ENCODE measurements at regions of chr14 and their contacts with region 1.

Region 1: DNA sequence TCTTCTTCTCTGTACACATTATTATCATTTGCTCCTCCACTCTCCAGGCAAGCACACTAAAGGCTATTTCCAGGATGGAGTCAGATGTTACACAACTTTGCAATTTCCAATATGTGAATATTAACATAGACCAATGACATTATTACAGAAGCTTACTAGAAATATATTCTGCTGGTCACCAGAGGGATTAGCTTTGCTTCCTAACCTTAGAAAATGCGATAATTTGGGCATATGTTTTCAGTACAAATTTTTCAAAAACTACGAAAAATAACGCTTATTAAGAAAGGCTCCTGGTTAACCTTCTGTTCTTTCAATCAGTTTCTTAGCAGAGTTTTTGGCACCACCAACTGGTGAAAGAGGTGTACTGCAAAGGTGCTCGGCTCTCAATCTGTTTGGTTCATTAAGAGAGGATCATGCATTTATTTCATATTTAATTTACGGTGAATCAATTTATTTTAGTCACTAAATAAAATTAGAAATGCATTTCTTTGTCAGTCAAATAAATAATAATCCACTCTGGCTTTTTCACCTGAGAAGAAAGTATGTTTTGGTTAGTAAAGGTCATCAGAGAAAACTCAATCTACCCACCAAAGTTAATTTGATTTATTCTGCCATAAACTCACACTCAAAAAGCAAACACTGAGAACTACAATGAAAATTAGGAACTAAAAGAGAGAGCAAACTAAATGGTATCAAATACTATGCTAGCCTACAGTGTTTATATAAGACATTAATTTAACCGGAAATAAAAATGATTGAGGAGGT is 39.2 kb downstream of the EFCAB11 start:
- DNase-seq: peak in 1 of 2 donors; percentile 74
- H3K4me3 ChIP-seq: no peak overlapping the region
- H3K27ac ChIP-seq: no peak overlapping the region
- H3K4me1 ChIP-seq: peaks cover 0 to 30% (median 17%) of the 10 kb centered on the region in 4 donors
- H3K27me3 ChIP-seq: no peaks in the 10 kb centered on the region
- CTCF ChIP-seq: peak; percentile 90 to 92

Region 2: GRCh38 chr14:89027097-89027740 is 888.1 kb before region 1 on chr14:
- intact Hi-C with region 1: loop called (anchors 5 kb)
- DNase-seq: peak in 1 of 2 donors; percentile 71
- H3K4me3 ChIP-seq: peak overlapping the region; percentile 46 to 60
- H3K27ac ChIP-seq: no peak overlapping the region
- H3K4me1 ChIP-seq: peaks cover 0 to 14% (median 12%) of the 10 kb centered on the region in 4 donors
- H3K27me3 ChIP-seq: peaks cover 0 to 29% of the 10 kb centered on the region in 2 donors
- CTCF ChIP-seq: peak; percentile 89 to 90

Region 3: DNA sequence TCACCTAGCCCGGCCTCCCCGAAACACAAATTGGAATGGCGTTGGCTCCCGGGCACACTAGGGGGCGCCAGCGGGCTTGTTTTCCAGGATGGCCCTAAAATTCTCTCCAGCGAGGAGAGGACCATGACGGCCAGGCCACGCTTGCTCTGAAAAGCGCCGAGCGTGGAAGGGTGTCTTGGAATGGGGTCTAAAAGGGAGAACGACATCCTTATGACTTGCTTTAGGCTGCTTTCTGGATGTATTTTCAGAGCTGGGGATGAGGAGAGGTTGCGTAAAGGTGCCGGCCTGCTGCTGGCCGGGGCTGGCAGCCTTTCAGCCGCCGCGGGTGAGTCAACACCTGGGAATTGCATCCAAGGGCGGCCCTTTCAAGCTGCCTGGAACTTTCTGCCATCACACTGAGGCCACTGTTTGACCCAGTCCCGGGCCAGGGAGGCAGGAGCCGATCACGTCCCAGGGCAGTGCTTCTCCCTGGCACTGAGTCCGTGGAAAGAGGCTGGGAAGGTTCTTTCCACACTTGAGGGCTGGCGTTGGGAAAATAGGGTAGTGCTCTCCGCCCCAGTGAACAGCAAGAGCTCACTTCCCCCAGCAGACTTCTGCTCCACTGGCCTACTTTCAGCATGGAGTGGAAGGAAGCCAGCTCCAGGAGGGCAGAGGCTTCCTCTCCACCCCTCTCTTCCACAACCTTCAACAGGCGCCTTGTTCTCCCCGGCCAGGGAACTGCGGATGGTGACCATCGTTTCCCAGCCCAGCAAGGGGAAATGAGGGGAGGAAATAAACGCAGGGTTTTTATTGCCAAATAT is 874.6 kb before region 1 on chr14:
- intact Hi-C with region 1: loop called (anchors 5 kb)
- DNase-seq: peak; percentile 90 to 95
- H3K4me3 ChIP-seq: peak overlapping the region; percentile 39 to 54
- H3K27ac ChIP-seq: peak overlapping the region; percentile 76 to 87
- H3K4me1 ChIP-seq: peaks cover 0 to 20% (median 12%) of the 10 kb centered on the region in 4 donors
- H3K27me3 ChIP-seq: peaks cover 0 to under 1% of the 10 kb centered on the region in 2 donors
- CTCF ChIP-seq: peak; percentile 90 to 95

Region 4: GRCh38 chr14:89237921-89238529 is 677.3 kb before region 1 on chr14:
- intact Hi-C with region 1: loop called (anchors 10 kb)
- DNase-seq: no peak
- H3K4me3 ChIP-seq: no peak overlapping the region
- H3K27ac ChIP-seq: peak overlapping the region in 1 of 2 donors; percentile 5
- H3K4me1 ChIP-seq: peaks cover 0 to 59% (median 33%) of the 10 kb centered on the region in 4 donors
- H3K27me3 ChIP-seq: no peaks in the 10 kb centered on the region
- CTCF ChIP-seq: peak; percentile 45 to 51